GM12878 (cell line): ENCODE measurements at regions of chr22 and their contacts with region 1.

Region 1: DNA sequence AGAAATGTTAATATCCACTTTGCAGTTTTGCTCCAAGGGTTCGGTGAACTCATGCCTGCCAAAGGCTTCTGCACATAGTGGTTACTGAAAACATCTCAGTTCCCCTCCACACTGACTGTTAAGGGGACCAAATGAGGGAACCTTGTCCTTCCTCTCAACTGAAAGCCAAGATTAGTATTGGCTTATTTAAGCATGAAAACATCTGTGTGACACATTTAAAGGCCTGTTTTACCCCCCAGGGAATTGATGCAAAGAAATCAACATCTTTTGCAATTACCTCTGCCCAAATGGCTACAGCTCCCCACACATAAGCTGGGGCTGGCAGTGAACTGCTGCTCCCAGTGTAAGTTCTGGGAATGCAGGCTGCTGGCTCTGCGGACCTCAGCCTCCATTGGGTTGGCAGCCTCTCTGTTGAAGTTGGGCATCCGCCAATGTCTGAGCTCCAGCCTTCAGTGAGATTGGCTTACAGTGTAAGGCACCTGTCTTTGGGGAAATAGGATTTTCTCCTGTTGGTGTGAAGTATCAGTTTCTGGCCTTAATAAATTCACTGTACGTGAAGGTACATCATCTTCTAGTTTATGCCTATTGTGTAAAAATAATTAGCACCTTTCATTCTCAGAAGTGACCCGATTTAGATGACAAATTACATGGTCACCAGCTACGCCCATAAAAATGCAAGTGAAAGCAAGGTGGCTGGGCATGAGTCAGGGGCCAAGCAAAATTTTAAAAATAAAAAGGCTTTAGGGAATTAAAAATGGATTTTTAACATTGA is 213.4 kb upstream of the SYN3 start:
- DNase-seq: peak; percentile 95
- ATAC-seq: peak; percentile 86
- H3K4me3 ChIP-seq: peak overlapping the region; percentile 3; the same call in 1 of the 2 replicates
- H3K27ac ChIP-seq: peak overlapping the region; percentile 88
- H3K4me1 ChIP-seq: peaks cover 56% of the 10 kb centered on the region
- H3K27me3 ChIP-seq: no peaks in the 10 kb centered on the region
- CTCF ChIP-seq: no peak
- EP300 ChIP-seq: peak; percentile 61 to 86; a peak in 3 of 4 replicates
- POLR2A ChIP-seq: no peak
- RAD21 ChIP-seq: 0 out of 2 replicates have a peak, but pooled peaks have one; percentile 0

Region 2: GRCh38 chr22:33018232-33018864 is 253.2 kb before region 1 on chr22:
- CTCF ChIA-PET with region 1: interaction called, 46 read pairs
- POLR2A ChIA-PET with region 1: no interaction called
- RAD21 ChIA-PET with region 1: interaction called, 22 read pairs
- SMC1A ChIA-PET with region 1: interaction called, 34 read pairs
- in situ Hi-C with region 1: no loop called
- intact Hi-C with region 1: loop called (anchors 2 kb)
- DNase-seq: peak; percentile 8
- ATAC-seq: peak; percentile 88
- H3K4me3 ChIP-seq: no peak overlapping the region
- H3K27ac ChIP-seq: no peak overlapping the region
- H3K4me1 ChIP-seq: no peaks in the 10 kb centered on the region
- H3K27me3 ChIP-seq: no peaks in the 10 kb centered on the region
- CTCF ChIP-seq: peak; percentile 85 to 90 (median 87)
- EP300 ChIP-seq: no peak
- POLR2A ChIP-seq: no peak
- RAD21 ChIP-seq: peak; percentile 83

Region 3: DNA sequence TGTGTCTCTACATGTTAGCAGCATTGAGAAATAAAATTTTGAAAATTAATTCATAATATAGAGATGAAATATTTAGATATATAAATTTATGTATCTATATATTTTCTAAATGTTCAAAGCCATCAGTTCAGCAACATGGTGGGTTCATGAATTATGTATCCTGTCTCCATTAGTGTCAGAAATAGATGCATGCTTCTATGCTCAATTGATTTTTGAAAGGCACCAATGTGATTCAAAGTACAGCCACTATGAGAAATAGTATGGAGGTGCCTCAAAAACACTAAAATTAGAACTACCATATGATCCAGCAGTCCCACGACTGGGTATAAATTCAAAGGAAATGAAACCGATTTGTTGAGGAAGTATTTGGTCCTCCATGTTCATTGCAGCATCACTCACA is 84.8 kb before region 1 on chr22:
- CTCF ChIA-PET with region 1: no interaction called
- POLR2A ChIA-PET with region 1: no interaction called
- RAD21 ChIA-PET with region 1: no interaction called
- SMC1A ChIA-PET with region 1: no interaction called
- in situ Hi-C with region 1: no loop called
- intact Hi-C with region 1: no loop called
- DNase-seq: no peak
- ATAC-seq: no peak
- H3K4me3 ChIP-seq: no peak overlapping the region
- H3K27ac ChIP-seq: no peak overlapping the region
- H3K4me1 ChIP-seq: no peaks in the 10 kb centered on the region
- H3K27me3 ChIP-seq: no peaks in the 10 kb centered on the region
- CTCF ChIP-seq: no peak
- EP300 ChIP-seq: no peak
- POLR2A ChIP-seq: no peak
- RAD21 ChIP-seq: no peak

Region 4: DNA sequence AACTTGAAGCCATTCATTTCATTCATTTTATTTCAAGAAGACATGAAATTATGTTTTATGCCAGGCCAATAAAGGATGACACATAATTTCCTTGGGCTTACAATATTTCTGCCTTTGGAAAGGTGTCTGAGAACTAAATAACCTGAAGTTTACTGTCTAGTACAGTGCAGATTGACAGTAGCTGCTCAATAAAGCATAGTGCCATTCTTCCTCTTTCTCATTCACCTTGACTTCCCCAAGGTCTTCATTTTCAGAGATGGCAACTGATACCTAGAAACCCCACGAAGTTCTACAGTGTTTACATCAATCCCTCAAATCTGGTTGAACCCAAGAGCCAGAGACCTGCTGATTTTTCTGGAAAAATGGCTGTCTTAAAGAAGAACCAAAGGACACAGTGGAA is 69.1 kb before region 1 on chr22:
- CTCF ChIA-PET with region 1: interaction called, 75 read pairs
- POLR2A ChIA-PET with region 1: interaction called, 4 read pairs
- RAD21 ChIA-PET with region 1: interaction called, 47 read pairs
- SMC1A ChIA-PET with region 1: interaction called, 62 read pairs
- in situ Hi-C with region 1: no loop called
- intact Hi-C with region 1: no loop called
- DNase-seq: no peak
- ATAC-seq: no peak
- H3K4me3 ChIP-seq: no peak overlapping the region
- H3K27ac ChIP-seq: no peak overlapping the region
- H3K4me1 ChIP-seq: peaks cover 4% of the 10 kb centered on the region; the same call in 1 of the 2 replicates
- H3K27me3 ChIP-seq: no peaks in the 10 kb centered on the region
- CTCF ChIP-seq: no peak
- EP300 ChIP-seq: no peak
- POLR2A ChIP-seq: no peak
- RAD21 ChIP-seq: no peak

Region 5: GRCh38 chr22:33240888-33241475 is 30.6 kb before region 1 on chr22:
- CTCF ChIA-PET with region 1: interaction called, 48 read pairs
- POLR2A ChIA-PET with region 1: interaction called, 5 read pairs
- RAD21 ChIA-PET with region 1: interaction called, 40 read pairs
- SMC1A ChIA-PET with region 1: interaction called, 83 read pairs
- in situ Hi-C with region 1: no loop called
- intact Hi-C with region 1: loop called (anchors 1 kb)
- DNase-seq: no peak
- ATAC-seq: no peak
- H3K4me3 ChIP-seq: no peak overlapping the region
- H3K27ac ChIP-seq: no peak overlapping the region; the same call in 1 of the 2 replicates
- H3K4me1 ChIP-seq: peaks cover 25% of the 10 kb centered on the region
- H3K27me3 ChIP-seq: no peaks in the 10 kb centered on the region
- CTCF ChIP-seq: no peak
- EP300 ChIP-seq: no peak
- POLR2A ChIP-seq: no peak
- RAD21 ChIP-seq: no peak

Region 6: DNA sequence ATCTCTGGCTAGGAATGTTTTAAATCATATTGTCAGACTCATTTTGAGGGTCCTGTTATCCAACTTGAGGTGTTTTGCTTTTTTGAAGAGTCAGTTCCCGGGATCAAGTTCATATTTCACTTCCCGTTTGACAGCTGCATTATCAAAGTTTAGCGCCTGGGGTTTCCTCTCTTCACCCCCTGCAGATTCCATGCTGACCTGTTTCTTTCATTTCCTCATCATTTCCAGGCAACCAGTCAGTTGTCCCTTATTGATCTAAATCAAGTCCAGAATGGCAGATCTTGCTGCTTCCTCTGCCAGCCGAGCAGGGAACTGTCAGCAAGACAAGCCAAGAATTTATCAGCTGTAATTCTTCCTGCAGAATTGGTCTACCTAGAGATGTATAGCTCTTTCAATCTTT is 15.8 kb before region 1 on chr22:
- CTCF ChIA-PET with region 1: interaction called, 17 read pairs
- POLR2A ChIA-PET with region 1: interaction called, 5 read pairs
- RAD21 ChIA-PET with region 1: interaction called, 6 read pairs
- SMC1A ChIA-PET with region 1: interaction called, 6 read pairs
- in situ Hi-C with region 1: no loop called
- intact Hi-C with region 1: no loop called
- DNase-seq: no peak
- ATAC-seq: no peak
- H3K4me3 ChIP-seq: 0 out of 2 replicates have a peak overlapping the region, but pooled peaks have one; percentile 17
- H3K27ac ChIP-seq: peak overlapping the region; percentile 6; the same call in 1 of the 2 replicates
- H3K4me1 ChIP-seq: peaks cover 9% of the 10 kb centered on the region; the same call in 1 of the 2 replicates
- H3K27me3 ChIP-seq: no peaks in the 10 kb centered on the region
- CTCF ChIP-seq: no peak
- EP300 ChIP-seq: no peak
- POLR2A ChIP-seq: no peak
- RAD21 ChIP-seq: no peak